Endothelial cell of umbilical vein (primary cell): ENCODE measurements at regions of chr3 and their contacts with region 1.

Region 1: GRCh38 chr3:183099026-183099837 is at the start of gene MCCC1:
- DNase-seq: peak; percentile 98
- H3K4me3 ChIP-seq: peak within 1 kb of the TSS; percentile 62 to 84 (median 79)
- H3K27ac ChIP-seq: peak within 1 kb of the TSS; percentile 43
- H3K4me1 ChIP-seq: peaks cover 15% of the 10 kb centered on the region
- H3K27me3 ChIP-seq: no peaks in the 10 kb centered on the region
- CTCF ChIP-seq: no peak
- POLR2A ChIP-seq: peak; percentile 69
- total RNA-seq, gene MCCC1: 19.7 and 22.7 TPM in 2 replicates

Region 2: GRCh38 chr3:182917134-182917533 is 182.1 kb before region 1 on chr3:
- CTCF ChIA-PET with region 1: no interaction called
- POLR2A ChIA-PET with region 1: no interaction called
- dilution Hi-C with region 1: no loop called
- intact Hi-C with region 1: loop called (anchors 5 kb)
- DNase-seq: no peak
- H3K4me3 ChIP-seq: no peak overlapping the region
- H3K27ac ChIP-seq: no peak overlapping the region
- H3K4me1 ChIP-seq: no peaks in the 10 kb centered on the region
- H3K27me3 ChIP-seq: no peaks in the 10 kb centered on the region
- CTCF ChIP-seq: no peak
- POLR2A ChIP-seq: no peak

Region 3: DNA sequence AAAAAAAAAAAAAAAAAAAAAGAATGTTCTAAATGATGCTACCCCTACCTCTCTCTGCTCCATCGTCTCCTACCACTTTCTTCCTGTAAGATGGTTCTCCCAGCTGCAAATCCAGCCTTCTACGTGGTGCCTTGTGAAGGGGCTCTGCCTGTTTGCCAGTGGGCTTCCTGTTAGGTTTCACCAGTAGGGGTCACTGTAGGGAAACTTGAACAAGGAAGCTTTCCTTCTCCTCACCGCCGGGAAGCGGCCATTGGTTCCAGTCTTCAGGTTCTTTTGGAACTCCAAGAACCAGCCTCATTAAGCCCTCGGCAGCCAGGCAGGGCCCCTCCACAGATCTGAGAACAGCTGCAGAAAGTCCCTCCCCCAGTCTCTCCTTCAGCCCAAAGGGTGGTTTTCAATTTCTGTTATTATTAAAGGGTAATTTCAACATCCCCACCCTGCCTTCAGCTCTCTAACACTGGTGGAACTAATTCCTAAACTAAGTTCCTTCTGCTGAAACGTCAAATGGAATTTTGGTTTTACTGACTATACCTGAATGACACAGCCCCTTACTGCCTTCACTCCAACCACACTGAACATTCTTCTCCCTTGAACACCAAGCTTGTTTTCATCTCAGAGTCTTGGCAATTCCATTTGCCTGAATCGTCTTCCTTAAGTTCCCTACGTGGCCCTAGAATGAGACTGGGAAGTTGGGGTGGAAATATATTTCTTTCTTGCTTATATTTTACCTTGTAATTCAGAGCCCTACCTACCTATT is 13.4 kb before region 1 on chr3:
- CTCF ChIA-PET with region 1: interaction called, 10 read pairs
- POLR2A ChIA-PET with region 1: no interaction called
- dilution Hi-C with region 1: no loop called
- intact Hi-C with region 1: no loop called
- DNase-seq: no peak
- H3K4me3 ChIP-seq: no peak overlapping the region
- H3K27ac ChIP-seq: no peak overlapping the region
- H3K4me1 ChIP-seq: no peaks in the 10 kb centered on the region
- H3K27me3 ChIP-seq: no peaks in the 10 kb centered on the region
- CTCF ChIP-seq: peak; percentile 26 to 44
- POLR2A ChIP-seq: no peak